MCF 10A (cell line): ENCODE measurements at regions of chr13 and their contacts with region 1.

Region 1: DNA sequence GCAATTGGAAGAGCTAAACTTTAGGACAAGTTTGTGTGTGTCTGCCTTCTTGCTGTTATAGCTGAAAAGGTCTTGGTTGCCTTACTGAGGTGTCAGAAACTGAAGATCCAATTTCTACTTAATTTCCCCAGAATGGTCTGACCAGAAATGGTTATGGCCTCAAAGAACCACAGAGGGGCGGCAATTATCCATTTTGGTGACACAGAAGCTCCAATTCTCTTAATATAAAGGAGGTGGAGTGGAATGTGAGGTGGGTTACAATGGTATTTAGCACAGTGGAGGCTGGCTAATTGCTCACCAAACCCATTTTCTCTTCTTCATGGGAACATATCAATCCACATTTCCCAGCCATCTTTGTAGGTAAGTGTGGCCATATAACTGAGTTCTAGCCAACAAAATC is 1157.2 kb downstream of the OLFM4 start:
- DNase-seq: peak; percentile 24
- H3K4me3 Mint-ChIP-seq: no peak overlapping the region
- H3K27ac Mint-ChIP-seq: no peak overlapping the region
- H3K4me1 Mint-ChIP-seq: no peaks in the 10 kb centered on the region
- H3K27me3 Mint-ChIP-seq: no peaks in the 10 kb centered on the region
- CTCF ChIP-seq: peak; percentile 37

Region 2: GRCh38 chr13:53460796-53461195 is 725.0 kb before region 1 on chr13:
- CTCF ChIA-PET with region 1: no interaction called
- POLR2A ChIA-PET with region 1: no interaction called
- intact Hi-C with region 1: no loop called
- DNase-seq: no peak
- H3K4me3 Mint-ChIP-seq: no peak overlapping the region
- H3K27ac Mint-ChIP-seq: no peak overlapping the region
- H3K4me1 Mint-ChIP-seq: no peaks in the 10 kb centered on the region
- H3K27me3 Mint-ChIP-seq: no peaks in the 10 kb centered on the region
- CTCF ChIP-seq: no peak

Region 3: DNA sequence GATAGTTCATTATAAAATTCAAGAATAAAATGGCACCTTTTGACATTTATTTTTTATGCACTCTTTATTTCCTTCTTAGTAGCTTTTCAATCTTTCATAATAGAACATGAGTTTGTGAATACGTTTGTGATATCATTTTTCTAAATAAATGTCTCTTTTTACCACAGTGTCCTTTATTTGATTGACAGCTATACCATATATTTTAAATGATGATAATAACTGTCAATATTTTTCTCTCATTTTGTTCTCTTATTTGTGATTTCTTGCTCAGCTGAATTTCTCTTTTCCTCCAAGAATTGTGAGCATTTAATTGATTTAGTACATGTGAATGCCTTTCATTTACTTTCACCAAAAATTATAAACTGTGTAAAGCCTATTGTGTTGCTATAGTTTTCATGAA is 519.4 kb before region 1 on chr13:
- CTCF ChIA-PET with region 1: no interaction called
- POLR2A ChIA-PET with region 1: no interaction called
- intact Hi-C with region 1: no loop called
- DNase-seq: no peak
- H3K4me3 Mint-ChIP-seq: no peak overlapping the region
- H3K27ac Mint-ChIP-seq: no peak overlapping the region
- H3K4me1 Mint-ChIP-seq: no peaks in the 10 kb centered on the region
- H3K27me3 Mint-ChIP-seq: no peaks in the 10 kb centered on the region
- CTCF ChIP-seq: no peak

Region 4: GRCh38 chr13:53782488-53782961 is 403.3 kb before region 1 on chr13:
- CTCF ChIA-PET with region 1: interaction called, 3 read pairs
- POLR2A ChIA-PET with region 1: no interaction called
- intact Hi-C with region 1: loop called (anchors 5 kb)
- DNase-seq: peak; percentile 69
- H3K4me3 Mint-ChIP-seq: peak overlapping the region; percentile 58
- H3K27ac Mint-ChIP-seq: no peak overlapping the region
- H3K4me1 Mint-ChIP-seq: peaks cover 5% of the 10 kb centered on the region
- H3K27me3 Mint-ChIP-seq: peaks cover 33% of the 10 kb centered on the region
- CTCF ChIP-seq: peak; percentile 79

Region 5: DNA sequence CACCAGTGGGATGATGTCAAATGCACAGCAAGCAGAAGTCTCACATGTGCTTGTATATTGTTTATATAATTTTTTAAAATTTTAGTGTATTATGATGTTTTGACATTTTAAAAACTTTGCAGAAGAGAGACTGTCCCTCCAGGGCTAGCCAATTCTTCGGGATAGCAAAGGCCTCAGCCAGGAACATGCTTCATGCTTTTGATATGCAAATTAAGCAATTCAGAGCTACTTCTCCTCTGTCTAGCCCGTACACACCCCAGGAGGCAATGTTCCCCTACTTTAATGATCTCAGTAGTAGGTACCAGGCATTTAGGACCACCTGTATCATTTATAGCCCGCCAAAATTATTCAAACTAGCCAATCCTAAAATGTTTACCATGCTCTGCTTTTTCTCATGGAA is 41.0 kb before region 1 on chr13:
- CTCF ChIA-PET with region 1: no interaction called
- POLR2A ChIA-PET with region 1: no interaction called
- intact Hi-C with region 1: no loop called
- DNase-seq: no peak
- H3K4me3 Mint-ChIP-seq: no peak overlapping the region
- H3K27ac Mint-ChIP-seq: no peak overlapping the region
- H3K4me1 Mint-ChIP-seq: no peaks in the 10 kb centered on the region
- H3K27me3 Mint-ChIP-seq: no peaks in the 10 kb centered on the region
- CTCF ChIP-seq: no peak

Region 6: DNA sequence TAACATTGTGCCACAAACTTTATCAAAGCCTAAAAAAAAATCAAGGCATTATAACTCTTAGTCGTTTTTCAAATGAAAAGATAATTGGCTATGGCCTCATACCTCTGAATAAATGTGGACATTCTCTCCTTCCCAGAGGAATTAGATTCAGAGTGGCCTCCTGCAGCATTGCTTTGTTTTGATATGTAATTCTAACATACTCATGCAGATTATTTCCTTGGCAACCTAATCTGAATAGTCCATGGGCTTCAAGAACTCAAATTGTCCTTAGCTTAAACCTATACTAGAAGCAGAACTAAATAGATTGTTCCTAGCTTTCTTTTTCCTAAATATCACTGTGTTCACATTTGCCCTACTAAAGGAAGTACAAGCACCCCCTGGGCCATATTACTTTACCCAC is 10.3 kb before region 1 on chr13:
- CTCF ChIA-PET with region 1: interaction called, 18 read pairs
- POLR2A ChIA-PET with region 1: no interaction called
- intact Hi-C with region 1: no loop called
- DNase-seq: no peak
- H3K4me3 Mint-ChIP-seq: no peak overlapping the region
- H3K27ac Mint-ChIP-seq: no peak overlapping the region
- H3K4me1 Mint-ChIP-seq: no peaks in the 10 kb centered on the region
- H3K27me3 Mint-ChIP-seq: peaks cover 12% of the 10 kb centered on the region
- CTCF ChIP-seq: no peak

Region 7: DNA sequence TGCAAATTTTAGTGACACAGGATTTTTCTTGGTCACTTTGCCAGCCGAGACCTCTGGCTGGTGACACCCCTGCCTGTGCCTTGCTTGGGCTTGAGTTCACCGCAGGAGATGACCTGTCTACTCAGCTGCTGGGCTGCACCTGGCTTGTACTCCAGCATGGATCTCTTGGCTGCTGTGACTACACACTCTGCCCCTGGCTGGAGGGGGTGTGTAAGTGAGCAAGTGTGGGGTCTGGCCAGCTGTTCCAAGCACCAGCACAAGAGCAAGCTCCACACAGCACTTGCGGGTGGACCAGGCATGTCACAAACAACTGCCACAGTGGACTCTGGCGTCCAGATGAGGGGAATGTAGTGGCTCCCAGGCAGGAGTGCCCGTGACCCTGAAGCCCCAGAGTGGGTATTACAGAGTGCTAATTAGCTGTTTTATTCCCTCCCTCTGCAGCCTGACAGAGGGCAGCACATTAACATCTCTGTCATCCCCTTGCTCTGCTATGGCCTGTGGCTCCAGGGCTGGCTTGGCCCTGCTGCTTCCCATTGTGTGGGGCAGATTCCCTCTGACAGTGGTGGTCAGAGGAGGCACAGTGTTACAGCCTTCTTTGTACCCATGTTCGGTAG is 230.1 kb after region 1 on chr13:
- CTCF ChIA-PET with region 1: no interaction called
- POLR2A ChIA-PET with region 1: no interaction called
- intact Hi-C with region 1: no loop called
- DNase-seq: no peak
- H3K4me3 Mint-ChIP-seq: no peak overlapping the region
- H3K27ac Mint-ChIP-seq: no peak overlapping the region
- H3K4me1 Mint-ChIP-seq: no peaks in the 10 kb centered on the region
- H3K27me3 Mint-ChIP-seq: no peaks in the 10 kb centered on the region
- CTCF ChIP-seq: no peak

Region 8: GRCh38 chr13:54536112-54536511 is 350.3 kb after region 1 on chr13:
- CTCF ChIA-PET with region 1: no interaction called
- POLR2A ChIA-PET with region 1: no interaction called
- intact Hi-C with region 1: loop called (anchors 1 kb)
- DNase-seq: peak; percentile 18
- H3K4me3 Mint-ChIP-seq: no peak overlapping the region
- H3K27ac Mint-ChIP-seq: no peak overlapping the region
- H3K4me1 Mint-ChIP-seq: no peaks in the 10 kb centered on the region
- H3K27me3 Mint-ChIP-seq: peaks cover 5% of the 10 kb centered on the region
- CTCF ChIP-seq: no peak